ENCODE measurements at regions of chr21 and their contacts with region 1.

Region 1: GRCh38 chr21:29462479-29462878 is 163.8 kb downstream of the BACH1 start:
- DNase-seq: no peak
- H3K4me3 ChIP-seq: no peak overlapping the region
- H3K4me3 Mint-ChIP-seq: no peak overlapping the region
- H3K27ac ChIP-seq: no peak overlapping the region
- H3K27ac Mint-ChIP-seq: peak overlapping the region in 1 of 7 donors; percentile 19
- H3K4me1 ChIP-seq: no peaks in the 10 kb centered on the region
- H3K4me1 Mint-ChIP-seq: peaks cover 0 to 7% (median 3%) of the 10 kb centered on the region in 4 donors
- H3K27me3 ChIP-seq: no peaks in the 10 kb centered on the region
- H3K27me3 Mint-ChIP-seq: no peaks in the 10 kb centered on the region

Region 2: DNA sequence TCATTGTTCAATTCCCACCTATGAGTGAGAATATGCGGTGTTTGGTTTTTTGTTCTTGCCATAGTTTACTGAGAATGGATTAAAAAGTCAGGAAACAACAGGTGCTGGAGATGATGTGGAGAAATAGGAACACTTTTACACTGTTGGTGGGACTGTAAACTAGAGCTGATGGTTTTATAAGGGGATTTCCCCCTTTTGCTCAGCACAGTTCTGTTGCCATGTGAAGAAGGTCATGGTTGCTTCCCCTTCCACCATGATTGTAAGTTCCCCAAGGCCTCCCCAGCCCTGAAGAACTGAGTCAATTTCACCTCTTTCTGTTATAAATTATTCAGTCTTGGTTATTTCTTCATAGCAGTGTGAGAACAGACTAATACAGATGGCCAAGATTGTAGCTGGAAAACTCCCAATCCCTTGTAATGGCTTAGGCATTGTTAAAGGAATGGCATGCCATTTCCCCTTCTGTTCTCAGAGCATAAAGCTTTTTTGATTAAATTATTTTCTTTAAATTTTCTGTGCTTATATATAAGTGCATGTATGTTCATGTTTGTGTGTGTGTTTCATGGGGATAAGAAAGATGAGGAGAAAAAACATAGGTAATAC is 19.0 kb before region 1 on chr21:
- CTCF ChIA-PET with region 1: no interaction called
- POLR2A ChIA-PET with region 1: no interaction called
- intact Hi-C with region 1: loop called (anchors 2 kb)
- DNase-seq: no peak
- H3K4me3 ChIP-seq: no peak overlapping the region
- H3K4me3 Mint-ChIP-seq: no peak overlapping the region
- H3K27ac ChIP-seq: no peak overlapping the region
- H3K27ac Mint-ChIP-seq: peak overlapping the region in 1 of 7 donors; percentile 24
- H3K4me1 ChIP-seq: peaks cover 4% of the 10 kb centered on the region
- H3K4me1 Mint-ChIP-seq: peaks cover 2 to 27% (median 7%) of the 10 kb centered on the region in 4 donors
- H3K27me3 ChIP-seq: no peaks in the 10 kb centered on the region
- H3K27me3 Mint-ChIP-seq: no peaks in the 10 kb centered on the region

Region 3: GRCh38 chr21:29477941-29478340 is 15.5 kb after region 1 on chr21:
- CTCF ChIA-PET with region 1: interaction called, 28 read pairs
- POLR2A ChIA-PET with region 1: no interaction called
- intact Hi-C with region 1: no loop called
- DNase-seq: no peak
- H3K4me3 ChIP-seq: no peak overlapping the region
- H3K4me3 Mint-ChIP-seq: no peak overlapping the region
- H3K27ac ChIP-seq: no peak overlapping the region
- H3K27ac Mint-ChIP-seq: no peak overlapping the region
- H3K4me1 ChIP-seq: no peaks in the 10 kb centered on the region
- H3K4me1 Mint-ChIP-seq: peaks cover 0 to 15% (median 3%) of the 10 kb centered on the region in 4 donors
- H3K27me3 ChIP-seq: no peaks in the 10 kb centered on the region
- H3K27me3 Mint-ChIP-seq: no peaks in the 10 kb centered on the region

Measured in CD4-positive, alpha-beta memory T cell (primary cell).